Activated T-helper 1 cell treated with anti-CD3 and anti-CD28 coated beads, Interleukin-12 subunit alpha, Interleukin-12 subunit beta, Interleukin-2, Interleukin-4 antibody, amounts not matched to agents 30 ng/mL and 10 ng/mL and 1 ng/mL, durations not matched to agents 14 hours and 24 hours and 36 hours (primary cell): ENCODE measurements at regions of chr16 and their contacts with region 1.

Region 1: DNA sequence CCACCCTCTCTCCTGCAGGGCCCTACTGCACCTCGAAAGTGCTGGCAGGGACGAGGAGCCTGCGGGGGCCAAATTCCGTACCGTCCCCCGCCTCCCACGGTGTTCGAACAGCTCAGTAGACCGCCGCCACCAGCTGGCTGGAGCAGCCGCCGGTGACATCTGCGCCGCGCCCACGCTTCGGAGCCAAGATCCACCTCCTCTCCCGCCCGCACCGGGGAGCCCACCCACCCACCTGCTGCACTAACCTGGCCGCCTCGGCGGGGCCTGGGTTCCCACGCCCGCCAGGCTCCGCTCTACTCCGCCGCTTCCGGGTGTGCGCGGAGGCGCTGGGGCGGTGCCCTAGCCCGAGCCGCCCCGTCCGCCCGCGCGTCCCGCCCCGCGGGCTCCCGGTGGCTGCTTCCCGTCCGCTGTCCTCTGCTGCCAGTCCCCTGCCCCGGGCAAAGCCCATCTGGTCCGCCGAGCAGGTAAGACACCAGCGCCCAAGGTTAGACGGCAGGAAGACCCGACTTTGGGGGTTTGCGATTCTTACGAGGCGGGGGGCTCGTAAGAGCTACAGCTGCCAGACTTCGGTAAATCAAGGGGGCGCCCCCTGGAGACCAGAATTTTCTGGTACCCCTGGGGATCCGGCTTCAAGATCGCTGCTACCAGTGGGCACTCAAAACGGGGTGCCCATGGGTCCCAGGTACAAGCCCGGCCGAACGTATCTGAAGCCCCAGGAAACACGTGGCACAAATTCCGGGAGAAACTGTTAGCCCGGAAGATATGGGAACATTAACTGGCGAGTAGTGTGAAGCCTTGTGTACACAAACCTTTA is at the starts of genes FBXL8 and TRADD:
- DNase-seq: peak; percentile 84
- H3K4me3 Mint-ChIP-seq: peak within 1 kb of the TSS; percentile 91
- H3K27ac Mint-ChIP-seq: peak within 1 kb of the TSS; percentile 92
- H3K4me1 Mint-ChIP-seq: peaks cover 45% of the 10 kb centered on the region
- H3K27me3 Mint-ChIP-seq: peaks cover 2% of the 10 kb centered on the region
- total RNA-seq, gene FBXL8: 19.3 and 22.4 TPM in 2 replicates
- total RNA-seq, gene TRADD: 29.0 TPM in 2 replicates

Region 2: DNA sequence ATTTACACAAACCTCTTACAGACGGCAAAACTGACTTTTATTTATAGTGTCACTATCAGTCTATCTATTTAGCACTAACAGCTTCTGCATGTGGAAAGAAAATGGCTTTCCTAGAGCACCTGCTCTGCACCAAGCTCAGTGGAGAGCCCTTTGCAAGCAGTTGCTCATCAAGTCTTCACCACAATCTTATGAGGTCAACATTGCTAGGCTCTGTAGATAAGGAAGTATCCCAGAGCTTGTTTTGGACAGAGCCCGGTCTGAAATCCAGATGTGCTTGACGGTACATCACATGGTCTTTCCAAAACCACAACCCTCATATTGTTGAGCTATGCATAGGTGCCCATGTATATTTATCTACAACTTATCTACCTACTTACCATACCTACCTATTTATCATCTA is 1366.0 kb before region 1 on chr16:
- intact Hi-C with region 1: no loop called
- DNase-seq: no peak
- H3K4me3 Mint-ChIP-seq: no peak overlapping the region
- H3K27ac Mint-ChIP-seq: no peak overlapping the region
- H3K4me1 Mint-ChIP-seq: no peaks in the 10 kb centered on the region
- H3K27me3 Mint-ChIP-seq: no peaks in the 10 kb centered on the region

Region 3: GRCh38 chr16:66880288-66881013 is 279.3 kb before region 1 on chr16 and contains the start of gene PDP2:
- intact Hi-C with region 1: loop called (anchors 5 kb)
- DNase-seq: peak; percentile 92
- H3K4me3 Mint-ChIP-seq: peak within 1 kb of the TSS; percentile 98
- H3K27ac Mint-ChIP-seq: peak within 1 kb of the TSS; percentile 95
- H3K4me1 Mint-ChIP-seq: peaks cover 51% of the 10 kb centered on the region
- H3K27me3 Mint-ChIP-seq: no peaks in the 10 kb centered on the region
- total RNA-seq, gene PDP2: 43.3 and 52.2 TPM in 2 replicates

Region 4: GRCh38 chr16:66977341-66978113 is 182.3 kb before region 1 on chr16:
- intact Hi-C with region 1: loop called (anchors 1 kb)
- DNase-seq: peak; percentile 83
- H3K4me3 Mint-ChIP-seq: no peak overlapping the region
- H3K27ac Mint-ChIP-seq: peak overlapping the region; percentile 75
- H3K4me1 Mint-ChIP-seq: peaks cover 57% of the 10 kb centered on the region
- H3K27me3 Mint-ChIP-seq: no peaks in the 10 kb centered on the region

Region 5: DNA sequence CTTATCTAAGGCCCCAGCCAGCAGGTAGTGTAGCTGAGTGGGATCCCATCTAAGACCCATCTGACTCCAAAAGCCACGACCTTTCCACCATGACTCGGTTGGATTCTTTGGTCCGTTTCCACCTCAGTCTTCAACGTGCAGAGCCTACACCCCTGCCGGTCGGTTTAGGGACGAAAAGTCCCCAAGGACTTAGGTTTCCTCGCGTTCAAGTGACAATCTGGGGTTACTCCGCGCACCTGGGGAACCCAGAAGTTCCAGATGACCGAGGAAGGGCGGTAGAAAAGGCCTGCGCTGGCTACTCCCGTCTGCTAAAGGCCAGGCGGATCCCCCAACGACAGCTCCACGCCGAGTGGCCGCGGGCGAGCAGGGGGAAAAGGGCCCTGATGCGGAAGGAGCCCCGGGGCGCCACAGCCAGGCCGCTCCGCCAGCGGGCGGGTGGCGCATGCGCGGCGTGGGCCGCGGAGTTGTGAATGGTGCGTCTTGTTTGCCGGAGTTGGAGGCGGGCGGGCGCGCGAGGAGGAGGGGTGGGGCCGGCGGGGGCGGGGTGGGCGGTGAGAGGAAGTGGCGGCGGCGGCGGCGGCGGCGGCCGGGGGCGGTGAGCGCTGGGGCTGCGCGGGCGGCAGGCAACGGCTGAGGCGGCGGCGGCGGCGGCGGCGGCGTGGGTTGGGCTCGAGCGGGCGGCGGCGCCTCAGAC is 131.1 kb before region 1 on chr16 and contains the start of gene CBFB:
- intact Hi-C with region 1: loop called (anchors 1 kb)
- DNase-seq: peak; percentile 94
- H3K4me3 Mint-ChIP-seq: peak within 1 kb of the TSS; percentile 93
- H3K27ac Mint-ChIP-seq: peak within 1 kb of the TSS; percentile 94
- H3K4me1 Mint-ChIP-seq: peaks cover 61% of the 10 kb centered on the region
- H3K27me3 Mint-ChIP-seq: no peaks in the 10 kb centered on the region
- total RNA-seq, gene CBFB: 171 and 175 TPM in 2 replicates

Region 6: DNA sequence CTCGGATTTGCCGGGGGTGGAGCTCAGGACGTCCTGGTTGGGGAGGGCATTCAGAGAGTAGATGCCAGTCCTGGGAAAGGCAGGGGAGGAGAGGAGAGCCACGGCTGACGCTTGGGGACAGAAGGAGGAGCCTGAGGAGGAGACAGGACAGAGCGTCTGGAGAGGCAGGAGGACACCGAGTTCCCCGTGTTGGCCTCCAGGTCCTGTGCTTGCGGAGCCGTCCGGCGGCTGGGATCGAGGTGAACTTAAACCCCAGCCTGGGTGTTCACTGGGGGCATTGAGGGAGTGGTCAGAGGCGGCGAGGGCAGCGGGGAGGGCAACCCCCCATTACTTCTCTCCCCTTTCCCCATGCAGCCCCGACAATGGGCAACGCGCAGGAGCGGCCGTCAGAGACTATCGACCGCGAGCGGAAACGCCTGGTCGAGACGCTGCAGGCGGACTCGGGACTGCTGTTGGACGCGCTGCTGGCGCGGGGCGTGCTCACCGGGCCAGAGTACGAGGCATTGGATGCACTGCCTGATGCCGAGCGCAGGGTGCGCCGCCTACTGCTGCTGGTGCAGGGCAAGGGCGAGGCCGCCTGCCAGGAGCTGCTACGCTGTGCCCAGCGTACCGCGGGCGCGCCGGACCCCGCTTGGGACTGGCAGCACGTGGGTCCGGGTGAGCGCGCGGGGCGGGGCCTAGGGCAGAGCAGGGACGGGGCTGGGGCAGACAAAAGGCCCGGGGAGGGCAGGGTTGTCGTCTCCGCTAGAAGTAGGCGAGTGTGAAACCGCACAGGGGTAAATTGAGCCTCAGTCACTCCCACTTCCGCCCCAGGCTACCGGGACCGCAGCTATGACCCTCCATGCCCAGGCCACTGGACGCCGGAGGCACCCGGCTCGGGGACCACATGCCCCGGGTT is 14.3 kb after region 1 on chr16:
- intact Hi-C with region 1: loop called (anchors 1 kb)
- DNase-seq: peak; percentile 71
- H3K4me3 Mint-ChIP-seq: peak overlapping the region; percentile 93
- H3K27ac Mint-ChIP-seq: peak overlapping the region; percentile 95
- H3K4me1 Mint-ChIP-seq: peaks cover 76% of the 10 kb centered on the region
- H3K27me3 Mint-ChIP-seq: no peaks in the 10 kb centered on the region

Region 7: GRCh38 chr16:67311607-67312488 is 152.0 kb after region 1 on chr16:
- intact Hi-C with region 1: loop called (anchors 2 kb)
- DNase-seq: peak; percentile 78
- H3K4me3 Mint-ChIP-seq: peak overlapping the region; percentile 19
- H3K27ac Mint-ChIP-seq: peak overlapping the region; percentile 98
- H3K4me1 Mint-ChIP-seq: peaks cover 45% of the 10 kb centered on the region
- H3K27me3 Mint-ChIP-seq: no peaks in the 10 kb centered on the region